ENCODE measurements at regions of chr12 and their contacts with region 1.

Region 1: GRCh38 chr12:41514907-41515306 is 326.8 kb downstream of the PDZRN4 start:
- DNase-seq: no peak

Region 2: GRCh38 chr12:41142376-41142775 is 372.5 kb before region 1 on chr12:
- intact Hi-C with region 1: no loop called
- DNase-seq: no peak

Region 3: DNA sequence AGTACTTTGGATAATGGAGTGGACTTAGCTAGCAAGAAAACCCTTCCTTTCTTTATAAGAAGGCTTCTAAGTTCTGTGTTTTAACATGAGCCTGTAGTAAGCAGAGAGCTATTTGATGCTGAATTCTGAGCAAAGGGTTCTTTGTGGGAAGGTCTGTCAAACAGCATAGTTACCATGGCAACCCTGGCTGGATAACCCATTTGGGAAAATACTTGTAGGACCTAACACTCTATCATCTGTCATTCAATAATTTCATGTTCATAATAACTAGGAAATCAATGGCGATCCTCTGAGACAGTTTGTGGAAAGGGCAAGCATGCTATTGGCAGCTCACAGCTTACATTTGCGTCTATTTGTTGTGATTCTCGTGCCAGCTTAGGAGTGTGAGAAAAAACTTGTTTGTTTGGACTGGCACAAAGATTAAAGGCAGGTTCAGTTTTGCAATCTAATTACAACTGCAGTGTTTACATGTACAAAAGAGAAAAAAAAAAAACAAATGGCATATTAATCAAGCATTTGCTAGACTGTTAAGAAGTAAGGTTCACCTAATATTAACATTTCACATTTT is 107.6 kb before region 1 on chr12:
- intact Hi-C with region 1: no loop called
- DNase-seq: no peak

Region 4: DNA sequence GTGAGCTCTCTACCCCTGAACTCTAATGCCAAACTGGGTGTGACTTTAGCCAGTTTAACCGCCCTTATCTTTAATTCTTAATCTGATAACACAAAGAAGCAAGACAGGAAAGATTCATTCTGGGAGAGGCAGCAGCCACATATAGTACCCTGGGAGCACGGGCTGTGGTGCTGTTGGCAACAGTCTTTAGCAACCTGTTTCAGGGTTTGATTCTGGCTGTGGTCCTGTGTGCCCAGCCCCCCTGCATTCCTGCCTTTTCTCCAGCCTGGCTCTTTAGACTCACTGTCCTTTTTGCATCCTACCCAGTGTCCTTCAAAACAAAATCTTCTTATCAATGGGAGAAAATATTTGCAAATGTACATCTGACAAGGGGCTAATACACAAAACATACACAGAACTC is 354.5 kb after region 1 on chr12:
- intact Hi-C with region 1: no loop called
- DNase-seq: no peak

Region 5: GRCh38 chr12:41972598-41972997 is 457.7 kb after region 1 on chr12:
- intact Hi-C with region 1: loop called in 1 of 2 experiments (anchors 5 kb)
- DNase-seq: no peak